ENCODE measurements at regions of chr4 and their contacts with region 1.

Region 1: GRCh38 chr4:32932156-32932555 is 2212.0 kb downstream of the PCDH7 start:
- DNase-seq: no peak

Region 2: GRCh38 chr4:32958586-32958985 is 26.4 kb after region 1 on chr4:
- intact Hi-C with region 1: loop called in 1 of 2 experiments (anchors 1 kb)
- DNase-seq: no peak

Measured in posterior vena cava (tissue), 2 donors.